ENCODE measurements at regions of chr2 and their contacts with region 1.

Region 1: GRCh38 chr2:208175069-208175839 is 11.9 kb upstream of the CRYGA start:
- DNase-seq: peak; percentile 72
- H3K4me3 ChIP-seq: no peak overlapping the region
- H3K27ac ChIP-seq: no peak overlapping the region
- H3K4me1 ChIP-seq: peaks cover 5% of the 10 kb centered on the region
- H3K27me3 ChIP-seq: no peaks in the 10 kb centered on the region
- CTCF ChIP-seq: peak; percentile 91 to 93

Region 2: DNA sequence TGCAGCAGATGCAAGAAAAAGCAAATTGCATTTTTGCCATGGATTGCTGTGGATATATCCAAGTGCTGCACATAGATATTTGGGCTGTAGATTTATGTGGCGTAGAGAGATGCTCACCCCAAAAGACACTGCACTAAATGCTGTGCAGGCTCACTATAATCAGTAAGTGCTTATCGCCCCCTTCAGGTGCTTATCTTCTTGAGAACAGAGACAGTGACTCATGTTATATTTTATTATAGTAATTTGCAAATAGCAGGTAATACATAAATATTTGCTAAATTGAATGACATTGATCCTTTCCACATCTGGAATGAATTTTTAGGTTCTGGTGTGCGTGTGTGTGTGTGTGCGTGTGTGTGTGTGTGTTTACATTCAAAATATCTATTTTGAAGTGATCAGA is 113.1 kb before region 1 on chr2:
- CTCF ChIA-PET with region 1: no interaction called
- dilution Hi-C with region 1: no loop called
- in situ Hi-C with region 1: no loop called
- intact Hi-C with region 1: no loop called
- DNase-seq: peak; percentile 33
- H3K4me3 ChIP-seq: no peak overlapping the region
- H3K27ac ChIP-seq: no peak overlapping the region
- H3K4me1 ChIP-seq: peaks cover 10% of the 10 kb centered on the region
- H3K27me3 ChIP-seq: no peaks in the 10 kb centered on the region
- CTCF ChIP-seq: peak; percentile 55 to 56

Region 3: DNA sequence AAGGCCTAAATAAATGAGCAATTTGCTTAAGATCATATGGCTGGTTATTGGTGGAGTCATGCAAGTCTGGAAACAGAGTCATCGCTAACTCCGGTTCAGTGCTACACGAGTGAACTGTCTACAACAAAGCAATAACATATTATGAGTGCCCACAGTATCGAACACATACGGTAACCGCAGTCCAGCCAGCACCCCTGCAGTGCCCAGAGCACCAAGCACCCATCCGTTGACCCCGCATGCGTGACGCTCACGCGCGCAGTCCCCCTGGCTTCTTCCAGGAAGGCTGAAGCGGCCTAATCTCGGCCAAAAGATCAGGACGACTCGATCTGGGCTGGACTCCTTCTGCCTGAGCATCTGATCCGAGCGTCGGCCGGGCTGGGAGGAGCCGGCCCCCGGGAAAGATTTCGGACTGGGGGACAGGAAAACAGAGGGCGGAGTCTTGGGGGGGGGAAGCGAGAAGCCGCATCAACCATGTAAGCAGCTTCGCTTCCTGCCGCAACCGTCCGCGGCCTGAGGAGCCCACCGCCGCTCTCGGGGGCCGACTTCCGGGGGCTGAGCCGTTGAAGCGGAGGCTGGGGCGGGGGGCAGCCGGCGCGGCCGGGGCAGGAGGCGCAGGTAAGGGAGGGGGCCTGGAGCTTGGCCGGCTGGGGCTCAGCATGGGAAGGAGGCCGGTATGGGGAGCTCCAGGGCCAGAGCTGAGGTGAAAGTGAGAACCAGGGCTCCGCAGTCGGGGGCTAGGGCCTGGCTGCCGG is 90.7 kb after region 1 on chr2 and contains the start of gene PIKFYVE:
- CTCF ChIA-PET with region 1: no interaction called
- dilution Hi-C with region 1: no loop called
- in situ Hi-C with region 1: no loop called
- intact Hi-C with region 1: loop called (anchors 1 kb)
- DNase-seq: peak; percentile 98
- H3K4me3 ChIP-seq: peak within 1 kb of the TSS; percentile 61 to 83 (median 83)
- H3K27ac ChIP-seq: peak within 1 kb of the TSS; percentile 71
- H3K4me1 ChIP-seq: peaks cover 16% of the 10 kb centered on the region
- H3K27me3 ChIP-seq: no peaks in the 10 kb centered on the region
- CTCF ChIP-seq: peak in 1 of 2 donors; percentile 1
- total RNA-seq, gene PIKFYVE: 31.9 to 44.2 TPM